ENCODE measurements at regions of chr17 and their contacts with region 1.

Region 1: GRCh38 chr17:7239091-7240027 is at the start of gene PHF23:
- DNase-seq: peak; percentile 99
- ATAC-seq: peak; percentile 74
- H3K4me3 Mint-ChIP-seq: peak within 1 kb of the TSS; percentile 97
- H3K27ac Mint-ChIP-seq: peak within 1 kb of the TSS; percentile 93
- H3K4me1 Mint-ChIP-seq: peaks cover 61% of the 10 kb centered on the region
- H3K27me3 Mint-ChIP-seq: no peaks in the 10 kb centered on the region
- total RNA-seq, gene PHF23: 23.6 to 35.2 TPM

Region 2: GRCh38 chr17:7204828-7205461 is 34.4 kb before region 1 on chr17:
- CTCF ChIA-PET with region 1: no interaction called
- POLR2A ChIA-PET with region 1: no interaction called
- intact Hi-C with region 1: loop called in 1 of 2 experiments (anchors 1 kb)
- DNase-seq: peak; percentile 95
- ATAC-seq: peak; percentile 92
- H3K4me3 Mint-ChIP-seq: peak overlapping the region; percentile 75
- H3K27ac Mint-ChIP-seq: peak overlapping the region; percentile 83
- H3K4me1 Mint-ChIP-seq: peaks cover 24% of the 10 kb centered on the region
- H3K27me3 Mint-ChIP-seq: no peaks in the 10 kb centered on the region

Region 3: GRCh38 chr17:7214300-7215135 is 24.8 kb before region 1 on chr17:
- CTCF ChIA-PET with region 1: interaction called, 25 read pairs
- POLR2A ChIA-PET with region 1: interaction called, 7 read pairs
- intact Hi-C with region 1: loop called (anchors 1 kb)
- DNase-seq: peak; percentile 100
- ATAC-seq: peak; percentile 82
- H3K4me3 Mint-ChIP-seq: peak overlapping the region; percentile 81
- H3K27ac Mint-ChIP-seq: peak overlapping the region; percentile 93
- H3K4me1 Mint-ChIP-seq: peaks cover 71% of the 10 kb centered on the region
- H3K27me3 Mint-ChIP-seq: peaks cover 7% of the 10 kb centered on the region

Region 4: GRCh38 chr17:7219812-7220581 is 19.4 kb before region 1 on chr17 and contains the starts of genes ACADVL and DLG4:
- CTCF ChIA-PET with region 1: interaction called, 25 read pairs
- POLR2A ChIA-PET with region 1: interaction called, 7 read pairs
- intact Hi-C with region 1: loop called (anchors 1 kb)
- DNase-seq: peak; percentile 94
- ATAC-seq: peak; percentile 73
- H3K4me3 Mint-ChIP-seq: peak within 1 kb of the TSS; percentile 89
- H3K27ac Mint-ChIP-seq: peak within 1 kb of the TSS; percentile 96
- H3K4me1 Mint-ChIP-seq: peaks cover 48% of the 10 kb centered on the region
- H3K27me3 Mint-ChIP-seq: no peaks in the 10 kb centered on the region
- total RNA-seq, gene ACADVL: 263 to 345 TPM
- total RNA-seq, gene DLG4: 11.7 to 15.4 TPM

Region 5: GRCh38 chr17:7329374-7329996 is 90.1 kb after region 1 on chr17:
- CTCF ChIA-PET with region 1: interaction called, 4 read pairs
- POLR2A ChIA-PET with region 1: interaction called, 3 read pairs
- intact Hi-C with region 1: loop called in 1 of 2 experiments (anchors 1 kb)
- DNase-seq: peak; percentile 98
- ATAC-seq: peak; percentile 69
- H3K4me3 Mint-ChIP-seq: peak overlapping the region; percentile 89
- H3K27ac Mint-ChIP-seq: peak overlapping the region; percentile 96
- H3K4me1 Mint-ChIP-seq: peaks cover 44% of the 10 kb centered on the region
- H3K27me3 Mint-ChIP-seq: no peaks in the 10 kb centered on the region

Region 6: GRCh38 chr17:7383742-7384488 is 144.6 kb after region 1 on chr17:
- CTCF ChIA-PET with region 1: no interaction called
- POLR2A ChIA-PET with region 1: no interaction called
- intact Hi-C with region 1: no loop called
- DNase-seq: peak; percentile 87
- ATAC-seq: peak; percentile 97
- H3K4me3 Mint-ChIP-seq: peak overlapping the region; percentile 73
- H3K27ac Mint-ChIP-seq: peak overlapping the region; percentile 70
- H3K4me1 Mint-ChIP-seq: peaks cover 10% of the 10 kb centered on the region
- H3K27me3 Mint-ChIP-seq: peaks cover 31% of the 10 kb centered on the region

Region 7: GRCh38 chr17:7887482-7888183 is 648.3 kb after region 1 on chr17:
- CTCF ChIA-PET with region 1: no interaction called
- POLR2A ChIA-PET with region 1: no interaction called
- intact Hi-C with region 1: loop called in 1 of 2 experiments (anchors 1 kb)
- DNase-seq: peak; percentile 94
- ATAC-seq: peak; percentile 79
- H3K4me3 Mint-ChIP-seq: no peak overlapping the region
- H3K27ac Mint-ChIP-seq: no peak overlapping the region
- H3K4me1 Mint-ChIP-seq: peaks cover 4% of the 10 kb centered on the region
- H3K27me3 Mint-ChIP-seq: no peaks in the 10 kb centered on the region

Measured in activated CD4-positive, alpha-beta T cell treated with anti-CD3 and anti-CD28 coated beads for 36 hours (primary cell).